ENCODE measurements at regions of chr4 and their contacts with region 1.

Region 1: GRCh38 chr4:140756319-140757231 is at the start of gene TBC1D9:
- DNase-seq: peak; percentile 61
- ATAC-seq: peak; percentile 65
- H3K4me3 ChIP-seq: peak within 1 kb of the TSS; percentile 86
- H3K27ac ChIP-seq: peak within 1 kb of the TSS; percentile 51
- H3K4me1 ChIP-seq: peaks cover 10% of the 10 kb centered on the region; the same call in 1 of the 2 replicates
- H3K27me3 ChIP-seq: no peaks in the 10 kb centered on the region
- CTCF ChIP-seq: no peak
- total RNA-seq, gene TBC1D9: 11.2 and 12.7 TPM in 2 replicates

Region 2: DNA sequence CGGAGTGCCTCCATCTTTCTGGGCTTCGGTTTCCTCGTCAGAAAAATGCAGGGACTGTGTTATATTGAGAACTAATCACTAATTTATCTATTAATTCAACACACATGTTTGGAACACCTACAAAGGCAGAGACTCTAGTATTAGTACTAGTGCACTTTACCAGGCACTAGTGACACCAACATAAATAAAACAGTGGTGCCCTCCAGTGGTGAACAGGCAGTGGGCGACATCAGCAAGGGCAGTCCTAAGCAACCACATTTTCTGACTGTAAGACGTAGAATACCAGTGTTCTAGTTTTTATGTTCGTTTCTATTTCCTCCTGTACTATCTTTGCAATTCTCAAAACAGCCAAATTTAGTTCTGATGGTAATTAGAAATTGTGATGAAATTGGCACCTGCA is 118.7 kb before region 1 on chr4:
- CTCF ChIA-PET with region 1: no interaction called
- POLR2A ChIA-PET with region 1: no interaction called
- intact Hi-C with region 1: loop called (anchors 5 kb)
- DNase-seq: peak; percentile 36
- ATAC-seq: peak; percentile 42; the same call in 1 of the 2 replicates
- H3K4me3 ChIP-seq: no peak overlapping the region
- H3K27ac ChIP-seq: no peak overlapping the region
- H3K4me1 ChIP-seq: peaks cover 14% of the 10 kb centered on the region
- H3K27me3 ChIP-seq: no peaks in the 10 kb centered on the region
- CTCF ChIP-seq: peak; percentile 71

Region 3: GRCh38 chr4:140743194-140743931 is 13.2 kb before region 1 on chr4:
- CTCF ChIA-PET with region 1: interaction called, 10 read pairs
- POLR2A ChIA-PET with region 1: no interaction called
- intact Hi-C with region 1: no loop called
- DNase-seq: peak; percentile 35
- ATAC-seq: peak; percentile 74
- H3K4me3 ChIP-seq: no peak overlapping the region
- H3K27ac ChIP-seq: no peak overlapping the region
- H3K4me1 ChIP-seq: peaks cover 14% of the 10 kb centered on the region
- H3K27me3 ChIP-seq: no peaks in the 10 kb centered on the region
- CTCF ChIP-seq: peak; percentile 56